ENCODE measurements at regions of chr13 and their contacts with region 1.

Region 1: DNA sequence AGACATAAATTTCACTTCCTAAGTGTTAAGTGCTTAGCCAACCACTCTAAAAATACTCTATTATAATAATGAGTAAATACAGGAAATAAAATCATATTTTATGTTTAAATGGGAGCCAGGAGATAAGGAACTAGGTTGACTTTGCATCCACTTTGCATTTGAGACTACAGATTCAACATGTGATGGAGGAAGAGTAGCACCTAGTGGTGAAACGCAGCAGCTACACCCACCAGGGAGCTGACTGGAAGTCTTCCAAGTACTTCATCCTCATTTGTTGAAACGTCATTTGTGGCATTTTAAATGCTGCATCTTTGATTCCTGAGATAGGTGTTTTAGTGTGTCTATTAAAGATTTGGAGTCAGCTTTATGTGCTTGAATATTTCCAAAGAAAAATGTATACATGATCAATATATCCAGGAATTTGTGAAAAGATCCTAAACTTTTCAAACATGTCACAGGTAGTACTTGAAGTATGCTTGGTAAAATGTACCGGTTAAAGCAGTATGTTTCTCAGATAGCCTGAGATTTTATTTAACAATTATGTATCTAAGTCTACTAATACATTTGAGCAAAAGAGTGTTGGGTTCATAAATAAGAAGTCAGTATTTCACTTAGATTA is 17.4 kb upstream of the KCTD12 start:
- DNase-seq: peak; percentile 53 to 68 (median 65)
- ATAC-seq: peak; percentile 89
- H3K4me3 ChIP-seq: no peak overlapping the region
- H3K27ac ChIP-seq: no peak overlapping the region
- H3K4me1 ChIP-seq: 0 out of 5 replicates have a peak, but pooled peaks cover 0 to 3% of the 10 kb centered on the region in 2 experiments
- H3K27me3 ChIP-seq: no peaks in the 10 kb centered on the region
- CTCF ChIP-seq: peak; percentile 64 to 87 (median 78)
- EP300 ChIP-seq: no peak
- POLR2A ChIP-seq: no peak
- RAD21 ChIP-seq: peak; percentile 72 to 83

Region 2: DNA sequence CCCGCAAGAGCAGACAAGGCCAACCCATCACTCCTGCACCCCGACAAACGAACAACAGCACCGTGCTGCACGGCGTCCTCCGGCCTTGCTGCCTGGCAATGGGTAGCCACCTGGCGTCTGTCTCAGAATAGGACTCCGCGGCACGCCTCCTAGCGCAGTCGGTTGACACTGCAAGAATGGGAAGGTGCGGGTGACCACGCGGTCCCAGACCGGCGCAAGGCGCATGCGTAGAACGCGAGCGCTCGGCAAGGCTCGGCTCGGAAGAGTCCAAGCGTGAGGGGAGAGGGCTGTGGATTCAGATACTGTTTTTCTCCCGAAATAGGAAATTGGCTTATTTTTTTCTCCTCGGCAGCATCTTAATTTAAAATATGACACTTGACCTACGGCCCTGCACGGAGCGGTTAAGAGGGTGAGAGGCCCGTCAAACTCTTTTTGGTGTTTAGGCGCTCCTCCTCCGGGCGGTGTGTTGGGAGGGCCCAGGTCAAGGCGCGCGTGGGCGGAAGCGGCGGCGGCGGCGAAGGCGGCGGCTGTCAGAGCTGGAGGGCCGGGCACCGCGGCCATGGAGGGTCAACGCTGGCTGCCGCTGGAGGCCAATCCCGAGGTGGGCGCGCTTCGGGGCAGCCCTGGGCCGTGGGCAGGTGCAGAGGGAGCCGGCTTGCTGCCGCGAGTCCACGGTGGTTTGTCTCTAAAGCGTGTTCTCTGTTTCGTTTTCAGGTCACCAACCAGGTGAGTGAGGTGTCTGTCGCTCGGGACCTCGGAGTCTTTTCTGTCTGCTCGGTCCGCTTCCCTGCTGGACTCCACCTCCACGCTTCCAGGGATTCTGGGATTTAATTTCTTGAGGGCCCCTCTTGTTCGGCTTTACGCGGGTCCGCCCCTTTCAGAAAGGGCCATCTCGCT is 1354.1 kb before region 1 on chr13 and contains the start of gene UCHL3:
- CTCF ChIA-PET with region 1: no interaction called
- POLR2A ChIA-PET with region 1: no interaction called
- in situ Hi-C with region 1: loop called (anchors 10 kb)
- intact Hi-C with region 1: no loop called
- DNase-seq: peak; percentile 92 to 96 (median 93)
- ATAC-seq: peak; percentile 94
- H3K4me3 ChIP-seq: peak within 1 kb of the TSS; percentile 84
- H3K27ac ChIP-seq: peak within 1 kb of the TSS; percentile 95
- H3K4me1 ChIP-seq: peaks cover 6% of the 10 kb centered on the region in 2 experiments; a peak in 3 of 5 replicates
- H3K27me3 ChIP-seq: no peaks in the 10 kb centered on the region
- CTCF ChIP-seq: peak; percentile 85 to 99 (median 96)
- EP300 ChIP-seq: no peak
- POLR2A ChIP-seq: peak; percentile 77
- RAD21 ChIP-seq: peak; percentile 72 to 79
- polyA plus RNA-seq, gene UCHL3: 108 to 112 TPM

Region 3: GRCh38 chr13:75694722-75695121 is 1208.9 kb before region 1 on chr13:
- CTCF ChIA-PET with region 1: interaction called, 3 read pairs
- POLR2A ChIA-PET with region 1: no interaction called
- in situ Hi-C with region 1: loop called (anchors 25 kb)
- intact Hi-C with region 1: loop called (anchors 2 kb)
- DNase-seq: no peak
- ATAC-seq: no peak
- H3K4me3 ChIP-seq: no peak overlapping the region
- H3K27ac ChIP-seq: no peak overlapping the region
- H3K4me1 ChIP-seq: no peaks in the 10 kb centered on the region
- H3K27me3 ChIP-seq: no peaks in the 10 kb centered on the region
- CTCF ChIP-seq: no peak
- EP300 ChIP-seq: no peak
- POLR2A ChIP-seq: no peak
- RAD21 ChIP-seq: no peak

Region 4: GRCh38 chr13:75876360-75877050 is 1027.1 kb before region 1 on chr13:
- CTCF ChIA-PET with region 1: no interaction called
- POLR2A ChIA-PET with region 1: no interaction called
- in situ Hi-C with region 1: loop called (anchors 25 kb)
- intact Hi-C with region 1: loop called (anchors 5 kb)
- DNase-seq: peak; percentile 52 to 74 (median 54)
- ATAC-seq: peak; percentile 98
- H3K4me3 ChIP-seq: no peak overlapping the region
- H3K27ac ChIP-seq: no peak overlapping the region
- H3K4me1 ChIP-seq: no peaks in the 10 kb centered on the region
- H3K27me3 ChIP-seq: no peaks in the 10 kb centered on the region
- CTCF ChIP-seq: peak; percentile 74 to 84 (median 75)
- EP300 ChIP-seq: no peak
- POLR2A ChIP-seq: no peak
- RAD21 ChIP-seq: peak; percentile 86 to 87

Region 5: DNA sequence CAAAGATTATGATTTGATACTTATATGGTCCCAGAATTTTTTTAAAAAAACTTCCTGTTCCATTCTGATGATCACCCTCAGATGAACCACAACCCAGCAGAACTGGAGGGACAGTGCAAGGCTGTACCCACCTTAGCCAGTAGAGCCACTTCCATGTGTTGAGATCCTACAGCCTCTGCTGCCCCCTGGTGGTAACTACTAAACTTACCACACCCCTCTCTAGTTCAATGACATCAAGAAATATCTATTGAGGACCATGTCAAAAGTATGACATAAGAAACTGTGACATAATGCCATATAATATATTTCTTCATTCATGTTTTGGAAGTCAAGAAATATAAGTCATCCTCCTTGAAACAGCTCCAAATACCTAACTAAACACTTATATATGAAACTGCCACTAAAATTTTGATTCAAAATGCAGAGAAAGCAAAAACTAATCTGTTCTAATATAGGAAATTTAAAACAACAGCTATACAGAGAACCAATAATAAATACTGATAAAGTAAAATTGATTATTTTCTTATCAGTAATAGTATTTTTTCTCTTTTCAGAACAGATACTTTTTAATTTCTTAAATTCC is 430.0 kb before region 1 on chr13:
- CTCF ChIA-PET with region 1: interaction called, 3 read pairs
- POLR2A ChIA-PET with region 1: no interaction called
- in situ Hi-C with region 1: no loop called
- intact Hi-C with region 1: loop called (anchors 10 kb)
- DNase-seq: peak; percentile 48 to 72 (median 64)
- ATAC-seq: peak; percentile 98
- H3K4me3 ChIP-seq: no peak overlapping the region
- H3K27ac ChIP-seq: no peak overlapping the region
- H3K4me1 ChIP-seq: no peaks in the 10 kb centered on the region
- H3K27me3 ChIP-seq: no peaks in the 10 kb centered on the region
- CTCF ChIP-seq: peak; percentile 62 to 89 (median 76)
- EP300 ChIP-seq: no peak
- POLR2A ChIP-seq: no peak
- RAD21 ChIP-seq: peak; percentile 75 to 80